ENCODE measurements at regions of chr3 and their contacts with region 1.

Region 1: GRCh38 chr3:152319831-152320617 is 51.3 kb downstream of the MBNL1 start:
- DNase-seq: no peak
- H3K4me3 Mint-ChIP-seq: no peak overlapping the region
- H3K27ac Mint-ChIP-seq: no peak overlapping the region
- H3K4me1 Mint-ChIP-seq: peaks cover 79% of the 10 kb centered on the region
- H3K27me3 Mint-ChIP-seq: no peaks in the 10 kb centered on the region

Region 2: GRCh38 chr3:152331018-152331541 is 11.1 kb after region 1 on chr3:
- CTCF ChIA-PET with region 1: interaction called, 6 read pairs
- POLR2A ChIA-PET with region 1: interaction called, 13 read pairs
- DNase-seq: no peak
- H3K4me3 Mint-ChIP-seq: no peak overlapping the region
- H3K27ac Mint-ChIP-seq: peak overlapping the region; percentile 25
- H3K4me1 Mint-ChIP-seq: peaks cover 80% of the 10 kb centered on the region
- H3K27me3 Mint-ChIP-seq: no peaks in the 10 kb centered on the region

Region 3: DNA sequence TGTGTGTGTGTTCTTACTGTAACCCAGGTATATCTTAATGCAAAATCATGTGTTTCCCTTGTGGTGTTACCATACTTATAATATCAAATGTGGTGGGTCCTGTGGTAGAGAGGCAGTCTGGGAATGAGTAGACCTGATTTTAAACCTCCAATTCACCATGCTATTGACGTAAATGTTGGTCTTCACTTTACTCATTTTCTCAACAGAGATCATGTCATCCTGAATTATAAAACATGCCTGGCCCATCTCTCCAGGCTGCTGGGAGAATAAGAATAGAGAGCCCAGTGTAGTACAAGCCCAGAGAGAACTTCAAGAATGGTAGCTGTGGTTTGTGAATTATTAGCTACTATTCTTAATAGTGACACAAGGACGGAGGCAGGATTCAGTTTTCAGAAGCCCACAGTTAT is 36.8 kb after region 1 on chr3:
- CTCF ChIA-PET with region 1: no interaction called
- POLR2A ChIA-PET with region 1: no interaction called
- DNase-seq: no peak
- H3K4me3 Mint-ChIP-seq: no peak overlapping the region
- H3K27ac Mint-ChIP-seq: peak overlapping the region; percentile 23
- H3K4me1 Mint-ChIP-seq: peaks cover 58% of the 10 kb centered on the region
- H3K27me3 Mint-ChIP-seq: no peaks in the 10 kb centered on the region